CD8-positive, alpha-beta T cell (primary cell): ENCODE measurements at regions of chr1 and their contacts with region 1.

Region 1: DNA sequence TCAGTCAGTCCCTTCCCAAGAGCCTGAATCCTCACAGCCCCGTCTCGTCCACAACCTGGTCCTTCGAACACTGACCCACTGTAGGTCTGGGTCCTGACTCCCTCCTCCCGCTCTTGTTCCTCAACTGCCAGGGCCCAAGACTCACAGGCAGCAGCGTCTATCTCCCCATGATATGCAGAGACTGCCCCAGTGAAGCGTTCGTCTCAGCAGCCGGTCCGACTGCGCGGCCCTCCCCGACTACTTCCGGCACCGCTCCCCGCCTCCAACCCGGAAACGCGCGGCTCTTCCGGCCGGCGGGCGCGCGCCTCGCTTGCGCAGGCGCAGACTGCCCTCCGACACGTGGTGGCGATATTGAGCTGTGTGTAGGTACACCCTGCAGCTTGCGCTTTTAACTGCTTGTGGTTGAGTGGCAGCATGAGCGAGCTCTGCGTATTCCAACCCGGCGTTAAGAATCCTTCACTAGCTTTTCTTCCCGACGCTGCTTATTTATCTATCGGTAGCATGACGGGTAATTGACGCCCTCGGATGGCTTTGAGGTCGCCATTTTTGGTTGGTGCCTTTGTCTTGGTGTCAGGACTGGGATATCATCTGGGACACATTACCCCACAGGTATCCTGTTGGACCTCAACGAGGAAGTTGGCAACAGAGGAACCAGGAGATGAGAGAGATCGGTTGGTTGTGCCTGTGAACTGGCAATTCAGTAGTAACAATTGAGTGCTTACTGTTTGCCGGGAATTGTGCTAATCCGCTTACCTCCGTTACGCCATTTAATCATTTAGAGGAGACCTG is at the start of gene TAF12:
- DNase-seq: peak; percentile 87 to 98 (median 91)
- ATAC-seq: peak; percentile 79
- H3K4me3 ChIP-seq: peak within 1 kb of the TSS; percentile 62 to 92
- H3K4me3 Mint-ChIP-seq: peak within 1 kb of the TSS; percentile 100
- H3K27ac ChIP-seq: peak within 1 kb of the TSS; percentile 88 to 90
- H3K27ac Mint-ChIP-seq: peak within 1 kb of the TSS; percentile 99
- H3K4me1 ChIP-seq: peaks cover 34% of the 10 kb centered on the region
- H3K4me1 Mint-ChIP-seq: peaks cover 54% of the 10 kb centered on the region
- H3K27me3 ChIP-seq: no peaks in the 10 kb centered on the region
- H3K27me3 Mint-ChIP-seq: no peaks in the 10 kb centered on the region
- CTCF ChIP-seq: peak; percentile 32
- total RNA-seq, gene TAF12: 7.7 to 8.5 TPM

Region 2: DNA sequence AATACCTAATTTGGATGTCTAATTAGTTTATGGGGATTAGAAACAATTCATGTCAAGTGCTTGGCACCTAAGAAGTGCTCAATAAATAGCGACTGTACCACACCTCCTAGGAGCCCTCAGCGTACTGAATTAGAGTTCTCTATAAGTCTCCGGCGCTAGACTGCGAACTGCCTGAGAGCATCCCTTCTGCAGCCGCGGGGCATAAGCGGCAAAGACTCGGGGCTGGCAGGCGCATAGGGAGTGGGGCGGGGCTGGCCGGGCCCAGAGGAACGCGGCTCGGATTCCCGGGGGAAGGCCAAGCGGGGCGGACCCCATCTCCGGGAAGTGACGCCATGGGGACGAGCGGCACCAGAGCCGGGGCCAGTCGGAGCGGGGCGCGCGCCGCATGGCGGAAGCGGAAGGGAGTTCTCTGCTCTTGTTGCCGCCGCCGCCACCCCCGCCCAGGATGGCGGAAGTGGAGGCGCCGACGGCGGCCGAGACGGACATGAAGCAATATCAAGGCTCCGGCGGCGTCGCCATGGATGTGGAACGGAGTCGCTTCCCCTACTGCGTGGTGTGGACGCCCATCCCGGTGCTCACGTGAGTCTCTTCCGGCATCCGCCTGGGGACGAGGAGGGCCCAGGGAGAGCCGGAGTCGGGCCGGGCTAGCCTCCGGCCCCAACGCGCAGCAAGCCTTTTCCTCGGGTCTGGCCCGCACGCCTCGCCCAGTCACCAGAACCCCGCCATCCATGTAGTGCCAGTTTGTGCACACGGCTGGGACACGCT is 1321.0 kb before region 1 on chr1 and contains the start of gene TMEM222:
- CTCF ChIA-PET with region 1: no interaction called
- POLR2A ChIA-PET with region 1: no interaction called
- intact Hi-C with region 1: loop called in 1 of 2 experiments (anchors 10 kb)
- DNase-seq: peak; percentile 95 to 99 (median 97)
- ATAC-seq: peak; percentile 93
- H3K4me3 ChIP-seq: peak within 1 kb of the TSS; percentile 95 to 99
- H3K4me3 Mint-ChIP-seq: peak within 1 kb of the TSS; percentile 98
- H3K27ac ChIP-seq: peak within 1 kb of the TSS; percentile 88 to 95
- H3K27ac Mint-ChIP-seq: peak within 1 kb of the TSS; percentile 97
- H3K4me1 ChIP-seq: peaks cover 40% of the 10 kb centered on the region
- H3K4me1 Mint-ChIP-seq: peaks cover 48% of the 10 kb centered on the region
- H3K27me3 ChIP-seq: no peaks in the 10 kb centered on the region
- H3K27me3 Mint-ChIP-seq: no peaks in the 10 kb centered on the region
- CTCF ChIP-seq: no peak
- total RNA-seq, gene TMEM222: 24.1 to 25.2 TPM

Region 3: GRCh38 chr1:28505406-28506187 is 137.4 kb before region 1 on chr1 and contains the start of gene RCC1:
- CTCF ChIA-PET with region 1: no interaction called
- POLR2A ChIA-PET with region 1: interaction called, 23 read pairs
- intact Hi-C with region 1: loop called in 1 of 2 experiments (anchors 1 kb)
- DNase-seq: peak; percentile 89 to 99 (median 94)
- ATAC-seq: peak; percentile 91
- H3K4me3 ChIP-seq: peak within 1 kb of the TSS; percentile 82 to 88
- H3K4me3 Mint-ChIP-seq: peak within 1 kb of the TSS; percentile 95
- H3K27ac ChIP-seq: peak within 1 kb of the TSS; percentile 77 to 85
- H3K27ac Mint-ChIP-seq: peak within 1 kb of the TSS; percentile 94
- H3K4me1 ChIP-seq: peaks cover 31% of the 10 kb centered on the region
- H3K4me1 Mint-ChIP-seq: peaks cover 45% of the 10 kb centered on the region
- H3K27me3 ChIP-seq: no peaks in the 10 kb centered on the region
- H3K27me3 Mint-ChIP-seq: no peaks in the 10 kb centered on the region
- CTCF ChIP-seq: no peak
- total RNA-seq, gene RCC1: 12.5 to 14.4 TPM

Region 4: GRCh38 chr1:28668191-28668955 is 25.3 kb after region 1 on chr1 and contains the start of gene GMEB1:
- CTCF ChIA-PET with region 1: interaction called, 23 read pairs
- POLR2A ChIA-PET with region 1: interaction called, 76 read pairs
- intact Hi-C with region 1: loop called (anchors 1 kb)
- DNase-seq: peak; percentile 66 to 91 (median 82)
- ATAC-seq: peak; percentile 61
- H3K4me3 ChIP-seq: peak within 1 kb of the TSS; percentile 83 to 98
- H3K4me3 Mint-ChIP-seq: peak within 1 kb of the TSS; percentile 92
- H3K27ac ChIP-seq: peak within 1 kb of the TSS; percentile 81 to 98
- H3K27ac Mint-ChIP-seq: peak within 1 kb of the TSS; percentile 97
- H3K4me1 ChIP-seq: peaks cover 9% of the 10 kb centered on the region
- H3K4me1 Mint-ChIP-seq: peaks cover 22% of the 10 kb centered on the region
- H3K27me3 ChIP-seq: no peaks in the 10 kb centered on the region
- H3K27me3 Mint-ChIP-seq: no peaks in the 10 kb centered on the region
- CTCF ChIP-seq: no peak
- total RNA-seq, gene GMEB1: 12.9 to 13.6 TPM

Region 5: DNA sequence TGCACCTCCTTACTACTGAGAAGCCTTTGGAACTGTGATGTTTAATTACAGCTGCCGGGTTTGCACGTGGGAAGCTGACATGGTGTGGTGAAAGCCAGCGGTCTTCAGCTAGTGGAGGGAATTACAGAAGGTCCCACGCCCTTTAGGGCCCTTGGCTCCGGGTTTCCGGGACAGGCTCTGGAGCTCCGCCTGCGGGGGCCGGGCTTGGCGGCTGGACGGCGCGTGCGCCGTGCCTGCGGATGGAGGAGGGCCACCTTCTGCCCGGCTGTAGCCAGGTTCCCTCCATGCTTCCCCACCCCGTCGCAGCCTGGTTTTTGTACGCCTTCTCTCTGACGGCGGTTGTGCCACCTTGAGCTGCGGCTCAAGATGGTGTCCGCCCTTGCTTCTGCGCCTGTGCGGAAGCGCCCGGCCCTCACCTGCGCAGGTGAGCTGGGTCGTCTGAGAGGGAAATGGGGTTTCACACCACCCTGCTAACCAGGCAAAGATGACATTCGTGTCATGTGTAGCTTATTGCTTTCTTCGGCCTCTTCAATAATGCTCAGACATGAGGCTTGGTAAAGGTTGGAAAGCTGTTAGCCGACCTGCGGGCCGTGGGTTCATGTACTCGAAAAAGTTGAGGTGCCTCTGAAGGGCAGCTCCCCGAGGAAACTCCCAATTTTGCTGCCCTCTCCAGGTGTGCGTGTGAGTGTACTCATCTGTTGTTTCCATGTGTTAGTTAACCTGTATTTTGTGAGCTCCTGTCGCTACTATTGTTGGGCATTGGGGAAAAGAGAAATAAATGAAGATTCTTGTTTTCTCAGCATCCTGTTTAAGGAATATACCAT is 132.3 kb after region 1 on chr1:
- CTCF ChIA-PET with region 1: interaction called, 4 read pairs
- POLR2A ChIA-PET with region 1: interaction called, 16 read pairs
- intact Hi-C with region 1: loop called in 1 of 2 experiments (anchors 1 kb)
- DNase-seq: peak; percentile 47 to 86 (median 69)
- ATAC-seq: peak; percentile 92
- H3K4me3 ChIP-seq: peak overlapping the region; percentile 48 to 56
- H3K4me3 Mint-ChIP-seq: peak overlapping the region; percentile 82
- H3K27ac ChIP-seq: peak overlapping the region; percentile 54 to 58
- H3K27ac Mint-ChIP-seq: peak overlapping the region; percentile 91
- H3K4me1 ChIP-seq: peaks cover 13% of the 10 kb centered on the region
- H3K4me1 Mint-ChIP-seq: peaks cover 12% of the 10 kb centered on the region
- H3K27me3 ChIP-seq: no peaks in the 10 kb centered on the region
- H3K27me3 Mint-ChIP-seq: no peaks in the 10 kb centered on the region
- CTCF ChIP-seq: no peak